ENCODE measurements at regions of chr12 and their contacts with region 1.

Region 1: GRCh38 chr12:57069523-57069922 is 9.1 kb downstream of the NEMP1 start:
- DNase-seq: no peak
- H3K4me3 ChIP-seq: no peak overlapping the region
- CTCF ChIP-seq: peak; percentile 70

Region 2: GRCh38 chr12:56541631-56542030 is 527.9 kb before region 1 on chr12:
- CTCF ChIA-PET with region 1: no interaction called
- POLR2A ChIA-PET with region 1: no interaction called
- DNase-seq: no peak
- H3K4me3 ChIP-seq: no peak overlapping the region
- CTCF ChIP-seq: no peak

Region 3: GRCh38 chr12:57088459-57089248 is 19.1 kb after region 1 on chr12 and contains the start of gene NAB2:
- CTCF ChIA-PET with region 1: interaction called, 40 read pairs
- POLR2A ChIA-PET with region 1: interaction called, 6 read pairs
- DNase-seq: peak; percentile 82
- H3K4me3 ChIP-seq: peak within 1 kb of the TSS; percentile 91
- CTCF ChIP-seq: no peak

Region 4: DNA sequence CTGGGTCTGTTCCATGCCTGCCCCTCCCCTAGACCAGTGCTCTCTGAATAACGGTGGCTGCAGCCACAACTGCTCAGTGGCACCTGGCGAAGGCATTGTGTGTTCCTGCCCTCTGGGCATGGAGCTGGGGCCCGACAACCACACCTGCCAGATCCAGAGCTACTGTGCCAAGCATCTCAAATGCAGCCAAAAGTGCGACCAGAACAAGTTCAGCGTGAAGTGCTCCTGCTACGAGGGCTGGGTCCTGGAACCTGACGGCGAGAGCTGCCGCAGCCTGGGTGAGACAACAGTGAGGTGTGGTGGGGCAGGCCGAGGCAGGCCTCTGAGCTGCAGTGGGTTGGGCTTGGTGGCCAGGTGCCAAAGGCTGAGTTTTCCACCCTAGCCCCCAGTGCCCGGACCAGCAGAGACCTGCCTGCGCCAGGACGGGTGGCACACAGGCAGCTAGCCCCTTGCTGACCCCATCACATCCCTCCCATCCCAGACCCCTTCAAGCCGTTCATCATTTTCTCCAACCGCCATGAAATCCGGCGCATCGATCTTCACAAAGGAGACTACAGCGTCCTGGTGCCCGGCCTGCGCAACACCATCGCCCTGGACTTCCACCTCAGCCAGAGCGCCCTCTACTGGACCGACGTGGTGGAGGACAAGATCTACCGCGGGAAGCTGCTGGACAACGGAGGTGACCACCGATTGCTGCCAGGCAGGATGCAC is 106.1 kb after region 1 on chr12:
- CTCF ChIA-PET with region 1: interaction called, 20 read pairs
- POLR2A ChIA-PET with region 1: no interaction called
- DNase-seq: no peak
- H3K4me3 ChIP-seq: no peak overlapping the region
- CTCF ChIP-seq: peak; percentile 91

Region 5: DNA sequence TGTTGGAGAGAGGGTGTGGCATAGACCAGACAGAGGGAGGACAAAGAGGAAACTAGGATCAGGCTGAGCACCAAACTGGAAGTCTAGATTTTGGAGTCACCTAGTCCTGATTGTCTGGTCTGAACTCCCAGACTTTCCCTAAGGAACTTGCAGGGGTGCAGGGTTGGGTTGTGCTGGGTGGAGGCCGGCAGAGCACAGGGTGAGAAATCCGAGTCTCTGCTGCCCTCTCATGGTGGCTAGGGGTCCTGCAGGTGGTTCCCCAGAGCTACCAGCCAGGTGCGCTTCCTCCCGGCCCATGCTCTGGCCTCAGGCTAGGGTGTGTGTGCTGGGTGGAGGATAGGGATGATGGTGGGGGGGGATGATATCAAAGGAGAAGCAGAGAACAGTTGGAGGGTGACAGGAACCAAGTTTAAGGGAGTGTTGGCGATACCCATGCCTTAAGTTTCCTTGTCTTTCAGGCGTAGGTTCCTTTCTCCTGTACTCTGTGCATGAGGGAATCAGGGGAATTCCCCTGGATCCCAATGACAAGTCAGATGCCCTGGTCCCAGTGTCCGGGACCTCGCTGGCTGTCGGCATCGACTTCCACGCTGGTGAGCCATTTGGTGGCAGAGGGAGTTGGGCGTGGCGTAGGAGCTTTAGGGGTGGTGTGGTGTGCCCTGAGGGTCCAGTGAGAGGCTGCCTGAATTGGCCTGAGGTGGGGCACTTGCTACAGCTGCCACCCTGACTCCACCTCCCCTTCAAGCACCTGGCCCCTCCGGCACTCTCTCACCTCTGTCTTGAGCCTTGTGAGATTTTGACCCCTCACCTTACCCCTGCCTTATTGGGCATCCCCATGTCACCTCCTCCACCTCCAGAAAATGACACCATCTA is 113.6 kb after region 1 on chr12:
- CTCF ChIA-PET with region 1: interaction called, 11 read pairs
- POLR2A ChIA-PET with region 1: no interaction called
- DNase-seq: no peak
- H3K4me3 ChIP-seq: no peak overlapping the region
- CTCF ChIP-seq: peak; percentile 92

Region 6: DNA sequence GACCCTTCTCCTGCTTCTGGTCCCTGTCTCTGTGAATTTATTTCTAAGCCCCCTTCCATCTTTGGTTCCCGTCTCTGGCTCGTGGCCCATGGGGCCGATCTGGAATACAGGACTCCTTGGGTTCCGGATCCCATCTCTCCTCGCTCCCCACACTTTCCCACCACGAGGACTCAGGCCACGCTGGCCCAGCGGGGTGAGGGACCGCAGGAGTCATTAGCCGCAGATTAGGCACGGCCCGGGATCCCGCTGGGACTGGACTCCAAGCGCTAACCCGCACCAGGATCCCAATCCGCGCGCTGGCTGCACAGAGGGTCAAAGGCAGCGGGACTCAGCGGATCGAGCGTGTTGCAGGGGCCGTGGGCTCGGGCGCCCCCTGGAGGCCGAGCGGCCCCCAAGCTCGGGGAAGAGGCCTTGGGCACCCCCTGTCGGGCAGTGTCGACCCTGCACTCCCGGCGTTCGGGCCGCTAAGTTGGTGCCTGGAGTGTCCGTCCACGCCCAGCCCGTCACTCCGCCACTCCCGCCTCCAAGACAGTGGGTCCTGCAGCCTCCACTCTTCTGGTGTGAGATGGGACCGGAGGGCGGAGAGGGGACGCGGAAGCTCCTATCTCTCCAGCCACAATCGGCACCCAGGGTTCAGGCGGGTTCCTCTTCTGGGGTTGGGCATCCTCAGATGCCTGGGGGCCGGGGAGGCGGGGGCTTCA is 169.5 kb after region 1 on chr12:
- CTCF ChIA-PET with region 1: interaction called, 20 read pairs
- POLR2A ChIA-PET with region 1: no interaction called
- DNase-seq: no peak
- H3K4me3 ChIP-seq: peak overlapping the region; percentile 69
- CTCF ChIP-seq: peak; percentile 100

Region 7: GRCh38 chr12:57611108-57611809 is 541.7 kb after region 1 on chr12 and contains the start of gene ARHGEF25:
- CTCF ChIA-PET with region 1: no interaction called
- POLR2A ChIA-PET with region 1: no interaction called
- DNase-seq: no peak
- H3K4me3 ChIP-seq: peak within 1 kb of the TSS; percentile 70
- CTCF ChIP-seq: no peak